A549 (cell line): ENCODE measurements at regions of chr5 and their contacts with region 1.

Region 1: DNA sequence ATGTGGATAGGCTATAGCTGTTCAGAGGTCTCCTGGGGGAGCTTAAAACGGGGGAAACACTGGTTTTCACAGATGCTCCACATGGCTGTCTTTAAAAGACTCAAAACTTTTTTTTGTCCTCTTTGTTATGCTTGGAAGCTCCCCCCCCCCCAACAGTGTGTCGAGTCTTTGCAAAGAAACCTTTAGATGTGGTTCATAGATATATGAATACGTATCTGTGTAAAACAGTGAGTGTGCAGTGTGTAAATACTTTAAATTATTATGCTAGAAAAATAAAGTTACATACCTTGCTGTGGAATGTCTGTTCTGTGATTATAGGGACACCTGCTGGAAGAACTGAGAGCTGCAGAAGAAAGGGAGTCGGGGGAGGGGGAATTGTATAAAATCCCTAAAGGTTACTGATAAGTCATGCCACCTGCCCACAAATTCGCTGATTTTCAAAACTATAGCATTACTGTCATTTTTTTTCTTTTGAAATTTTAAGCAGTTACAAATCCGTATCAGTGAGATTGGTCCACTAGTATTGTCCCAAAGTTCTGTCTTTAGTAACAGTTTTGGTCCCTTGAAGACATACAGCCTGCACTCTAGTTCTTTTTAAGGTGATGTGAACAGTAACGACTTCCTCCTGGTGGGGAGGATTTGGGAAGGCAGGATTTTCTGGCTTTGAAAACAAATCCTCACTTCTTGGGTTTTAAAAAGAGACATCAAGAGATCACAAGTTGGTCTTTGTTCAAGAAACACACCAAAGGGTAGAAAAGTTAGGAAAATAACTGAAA is 22.9 kb downstream of the RGMB start:
- DNase-seq: peak; percentile 46 to 76
- ATAC-seq: peak; percentile 79 to 89
- H3K4me3 ChIP-seq: no peak overlapping the region
- H3K27ac ChIP-seq: no peak overlapping the region
- H3K4me1 ChIP-seq: 0 out of 3 replicates have a peak, but pooled peaks cover 3% of the 10 kb centered on the region
- CTCF ChIP-seq: peak; percentile 73
- EP300 ChIP-seq: no peak
- POLR2A ChIP-seq: no peak
- RAD21 ChIP-seq: peak; percentile 71 to 74

Region 2: DNA sequence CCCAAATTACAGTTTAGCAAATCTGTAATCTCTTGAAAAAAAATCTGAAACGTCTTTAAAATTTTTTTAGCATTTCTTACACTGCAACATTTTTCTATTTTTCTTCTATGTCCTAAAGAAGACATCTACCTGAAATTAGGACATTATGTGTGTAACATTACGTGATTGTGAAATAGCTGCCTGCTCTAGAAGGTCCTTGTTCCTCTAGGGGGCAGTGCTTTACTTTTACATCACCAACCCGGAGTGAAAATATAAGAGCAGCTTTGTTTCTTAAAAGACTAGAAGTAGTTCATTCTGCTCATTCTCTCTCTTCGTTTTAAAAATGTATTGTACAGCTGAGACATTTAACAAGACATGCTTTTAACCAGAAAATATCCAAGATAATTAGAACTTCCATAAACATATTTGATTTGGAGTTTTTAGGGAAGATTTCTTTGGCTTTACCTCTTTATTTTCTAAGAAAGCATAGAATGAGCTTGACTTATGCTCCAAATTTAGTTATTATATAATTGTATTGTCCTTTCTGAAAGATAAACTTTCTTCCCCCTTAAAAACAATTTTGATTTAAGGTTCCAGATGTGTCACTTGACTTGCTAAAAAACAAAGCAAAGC is 1565.3 kb before region 1 on chr5:
- CTCF ChIA-PET with region 1: interaction called, 17 read pairs
- POLR2A ChIA-PET with region 1: no interaction called
- DNase-seq: peak; percentile 31 to 73
- ATAC-seq: peak; percentile 80 to 83; a peak in 5 of 6 replicates
- H3K4me3 ChIP-seq: no peak overlapping the region
- H3K27ac ChIP-seq: no peak overlapping the region
- H3K4me1 ChIP-seq: no peaks in the 10 kb centered on the region
- CTCF ChIP-seq: peak; percentile 89
- EP300 ChIP-seq: no peak
- POLR2A ChIP-seq: no peak
- RAD21 ChIP-seq: peak; percentile 82

Region 3: GRCh38 chr5:98773464-98774191 is 22.8 kb before region 1 on chr5 and contains the start of gene RGMB:
- CTCF ChIA-PET with region 1: interaction called, 127 read pairs
- POLR2A ChIA-PET with region 1: interaction called, 4 read pairs
- DNase-seq: peak; percentile 98 to 99
- ATAC-seq: peak; percentile 81 to 89
- H3K4me3 ChIP-seq: peak within 1 kb of the TSS; percentile 57
- H3K27ac ChIP-seq: peak within 1 kb of the TSS; percentile 77 to 92
- H3K4me1 ChIP-seq: peaks cover 22% of the 10 kb centered on the region
- CTCF ChIP-seq: peak; percentile 32; the same call in 2 of the 3 replicates
- EP300 ChIP-seq: no peak
- POLR2A ChIP-seq: peak; percentile 59; the same call in 1 of the 2 replicates
- RAD21 ChIP-seq: no peak
- polyA plus RNA-seq, gene RGMB: 5.3 and 7.5 TPM in 2 replicates

Region 4: GRCh38 chr5:98786191-98786853 is 10.1 kb before region 1 on chr5:
- CTCF ChIA-PET with region 1: interaction called, 39 read pairs
- POLR2A ChIA-PET with region 1: no interaction called
- DNase-seq: no peak
- ATAC-seq: no peak
- H3K4me3 ChIP-seq: no peak overlapping the region
- H3K27ac ChIP-seq: no peak overlapping the region
- H3K4me1 ChIP-seq: no peaks in the 10 kb centered on the region
- CTCF ChIP-seq: no peak
- EP300 ChIP-seq: no peak
- POLR2A ChIP-seq: no peak
- RAD21 ChIP-seq: no peak